Ascending aorta (tissue), 2 donors: ENCODE measurements at regions of chrX and their contacts with region 1.

Region 1: DNA sequence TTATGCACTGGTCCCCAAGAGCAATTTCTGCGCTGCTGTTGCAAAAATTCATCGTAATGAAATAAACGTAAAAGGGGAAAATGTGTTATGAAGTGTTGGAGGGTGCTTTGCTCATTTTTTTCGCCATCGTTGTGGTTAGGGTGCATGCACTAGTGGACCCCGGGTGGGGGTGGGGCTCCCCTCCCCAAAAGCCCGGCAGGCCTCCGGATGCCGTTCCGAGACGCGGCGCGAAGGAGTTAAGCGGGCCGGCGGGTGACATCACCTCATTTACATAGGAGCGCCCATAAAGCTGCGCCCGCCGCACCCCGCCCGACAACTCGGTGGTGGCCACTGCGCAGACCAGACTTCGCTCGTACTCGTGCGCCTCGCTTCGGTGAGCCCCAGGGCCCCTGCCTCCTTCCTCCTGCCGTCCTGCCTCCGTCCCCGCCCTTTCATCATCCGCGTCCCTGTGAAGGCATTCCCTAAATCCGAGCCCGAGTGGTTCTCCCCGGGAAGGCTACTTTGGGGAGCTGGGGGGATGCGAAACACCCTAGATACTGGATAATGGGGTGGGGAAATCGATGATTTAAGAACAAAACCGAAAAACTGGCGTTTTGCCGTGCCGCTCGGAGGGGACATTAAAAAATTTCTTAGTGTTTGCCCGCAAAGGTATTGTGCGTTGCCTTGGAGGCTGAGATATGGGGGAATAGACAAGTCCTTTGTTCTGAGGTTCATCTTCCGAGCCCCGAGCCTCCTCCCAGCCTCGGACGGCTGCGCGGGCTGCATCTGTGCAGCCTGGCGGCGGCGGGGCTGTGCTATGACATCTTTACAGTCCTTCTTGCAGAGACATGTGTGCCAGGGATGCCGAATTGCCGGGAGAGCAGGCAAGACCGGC is at the start of gene TMSB4X:
- DNase-seq: peak in 1 of 2 donors; percentile 91
- H3K4me3 ChIP-seq: peak within 1 kb of the TSS; percentile 70 to 78
- H3K27ac ChIP-seq: peak within 1 kb of the TSS; percentile 86 to 94
- H3K4me1 ChIP-seq: peaks cover 0 to 13% of the 10 kb centered on the region in 2 donors
- H3K27me3 ChIP-seq: no peaks in the 10 kb centered on the region
- CTCF ChIP-seq: no peak
- total RNA-seq, gene TMSB4X: 2,397 TPM

Region 2: GRCh38 chrX:13078739-13079444 is 103.9 kb after region 1 on chrX:
- intact Hi-C with region 1: loop called (anchors 5 kb)
- DNase-seq: peak; percentile 20 to 78
- H3K4me3 ChIP-seq: peak overlapping the region in 1 of 2 donors; percentile 35
- H3K27ac ChIP-seq: peak overlapping the region; percentile 71 to 76
- H3K4me1 ChIP-seq: peaks cover 0 to 7% of the 10 kb centered on the region in 2 donors
- H3K27me3 ChIP-seq: no peaks in the 10 kb centered on the region
- CTCF ChIP-seq: no peak

Region 3: GRCh38 chrX:13223868-13224555 is 249.0 kb after region 1 on chrX:
- intact Hi-C with region 1: loop called (anchors 10 kb)
- DNase-seq: no peak
- H3K4me3 ChIP-seq: no peak overlapping the region
- H3K27ac ChIP-seq: peak overlapping the region in 1 of 2 donors; percentile 34
- H3K4me1 ChIP-seq: no peaks in the 10 kb centered on the region
- H3K27me3 ChIP-seq: no peaks in the 10 kb centered on the region
- CTCF ChIP-seq: no peak

Region 4: DNA sequence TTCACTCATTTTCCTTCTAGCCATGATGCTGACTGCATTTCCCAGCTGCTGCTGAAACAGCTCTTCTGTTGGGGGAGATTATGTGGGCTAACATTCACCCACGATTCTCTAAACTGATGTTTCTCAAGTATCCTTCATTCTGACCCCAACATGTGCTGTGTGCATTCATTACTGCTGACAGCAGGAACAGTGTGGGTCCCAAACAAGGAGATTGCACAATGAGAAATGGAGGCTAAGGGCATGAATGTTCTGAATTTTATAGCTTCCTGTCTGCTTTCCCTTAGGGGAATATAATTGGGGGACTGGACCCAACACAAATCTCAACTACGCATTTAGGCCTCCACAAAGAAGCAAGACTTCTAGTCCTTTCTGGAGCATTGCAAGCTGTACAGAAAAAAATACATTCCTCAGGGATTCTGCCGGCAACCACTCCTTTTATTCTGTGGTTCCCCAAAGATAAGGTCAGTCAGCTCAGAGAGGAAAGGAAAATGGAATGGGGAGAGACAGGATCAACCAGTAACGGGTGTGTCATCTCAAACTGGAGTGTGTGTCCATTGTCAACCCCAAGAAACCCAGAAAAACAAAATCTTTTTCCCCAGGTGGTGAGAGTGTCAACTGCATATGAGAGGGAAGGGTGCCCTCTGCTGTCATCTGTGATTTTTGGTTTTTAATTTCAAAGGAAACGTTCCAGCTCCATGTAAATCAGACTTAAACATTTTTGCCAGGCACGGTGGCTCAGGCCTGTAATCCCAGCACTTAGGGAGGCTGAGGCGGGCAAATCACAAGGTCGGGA is 512.9 kb after region 1 on chrX:
- intact Hi-C with region 1: loop called (anchors 1 kb)
- DNase-seq: peak in 1 of 2 donors; percentile 69
- H3K4me3 ChIP-seq: no peak overlapping the region
- H3K27ac ChIP-seq: peak overlapping the region; percentile 71 to 82
- H3K4me1 ChIP-seq: peaks cover 0 to 10% of the 10 kb centered on the region in 2 donors
- H3K27me3 ChIP-seq: no peaks in the 10 kb centered on the region
- CTCF ChIP-seq: peak; percentile 37 to 86 (median 70)

Region 5: GRCh38 chrX:13734278-13735172 is 759.5 kb after region 1 on chrX and contains the starts of genes OFD1 and TRAPPC2:
- intact Hi-C with region 1: loop called (anchors 5 kb)
- DNase-seq: peak; percentile 82 to 98
- H3K4me3 ChIP-seq: peak within 1 kb of the TSS; percentile 70 to 80
- H3K27ac ChIP-seq: peak within 1 kb of the TSS; percentile 82 to 84
- H3K4me1 ChIP-seq: peaks cover 0 to 6% of the 10 kb centered on the region in 2 donors
- H3K27me3 ChIP-seq: no peaks in the 10 kb centered on the region
- CTCF ChIP-seq: no peak
- total RNA-seq, gene OFD1: 8.4 TPM
- total RNA-seq, gene TRAPPC2: 8.0 TPM